ENCODE measurements at regions of chr14 and their contacts with region 1.

Region 1: DNA sequence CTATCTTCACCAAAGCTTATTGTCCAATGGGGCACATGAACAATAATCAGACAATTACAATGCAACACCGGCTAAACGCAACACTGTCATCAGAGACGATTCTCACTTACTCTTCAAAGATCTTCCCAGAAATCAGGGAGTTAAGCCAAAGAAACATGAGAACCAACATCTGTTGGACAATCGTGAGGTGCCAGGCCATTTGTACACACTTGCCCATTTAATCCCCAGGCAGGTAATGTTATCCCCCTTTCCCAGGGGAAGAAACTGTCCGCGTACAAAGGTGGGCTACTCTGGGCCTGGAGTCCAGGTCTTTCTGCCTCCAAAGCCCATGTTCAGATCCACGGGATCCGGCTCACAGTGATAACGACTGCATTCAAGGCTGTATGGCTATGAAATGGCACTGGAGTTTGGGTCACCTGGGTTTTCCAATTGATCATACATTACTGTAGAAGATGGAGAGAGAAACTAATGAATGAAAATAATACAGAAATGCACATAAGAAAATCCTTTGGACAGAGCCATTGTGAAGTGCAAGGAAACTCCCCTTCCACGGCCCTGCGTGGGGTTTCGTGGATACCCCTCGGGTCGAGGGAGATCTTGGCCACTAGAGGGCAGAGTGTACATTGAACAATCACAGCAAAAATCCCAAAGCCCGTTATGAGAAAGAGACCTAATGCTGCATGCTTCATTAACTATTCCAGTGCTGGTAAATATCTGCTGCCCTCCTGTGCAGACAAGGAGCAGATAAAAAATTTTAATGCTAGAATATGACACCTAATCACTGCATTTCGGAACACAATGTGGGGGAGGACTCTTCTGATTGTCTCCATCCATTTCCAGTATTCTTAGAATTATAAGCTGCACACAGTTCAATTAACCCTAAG is 111.4 kb downstream of the EGLN3 start:
- DNase-seq: peak in 1 of 2 donors; percentile 73
- ATAC-seq: peak in 2 of 3 donors; percentile 45 to 60
- H3K4me3 ChIP-seq: no peak overlapping the region
- H3K4me3 Mint-ChIP-seq: no peak overlapping the region
- H3K27ac ChIP-seq: no peak overlapping the region
- H3K27ac Mint-ChIP-seq: no peak overlapping the region
- H3K4me1 ChIP-seq: no peaks in the 10 kb centered on the region
- H3K4me1 Mint-ChIP-seq: no peaks in the 10 kb centered on the region
- H3K27me3 ChIP-seq: no peaks in the 10 kb centered on the region
- H3K27me3 Mint-ChIP-seq: no peaks in the 10 kb centered on the region
- CTCF ChIP-seq: peak; percentile 64

Region 2: GRCh38 chr14:33879684-33880286 is 40.4 kb after region 1 on chr14:
- intact Hi-C with region 1: no loop called
- DNase-seq: no peak
- ATAC-seq: no peak
- H3K4me3 ChIP-seq: no peak overlapping the region
- H3K4me3 Mint-ChIP-seq: no peak overlapping the region
- H3K27ac ChIP-seq: no peak overlapping the region
- H3K27ac Mint-ChIP-seq: no peak overlapping the region
- H3K4me1 ChIP-seq: no peaks in the 10 kb centered on the region
- H3K4me1 Mint-ChIP-seq: no peaks in the 10 kb centered on the region
- H3K27me3 ChIP-seq: no peaks in the 10 kb centered on the region
- H3K27me3 Mint-ChIP-seq: no peaks in the 10 kb centered on the region
- CTCF ChIP-seq: no peak

Region 3: DNA sequence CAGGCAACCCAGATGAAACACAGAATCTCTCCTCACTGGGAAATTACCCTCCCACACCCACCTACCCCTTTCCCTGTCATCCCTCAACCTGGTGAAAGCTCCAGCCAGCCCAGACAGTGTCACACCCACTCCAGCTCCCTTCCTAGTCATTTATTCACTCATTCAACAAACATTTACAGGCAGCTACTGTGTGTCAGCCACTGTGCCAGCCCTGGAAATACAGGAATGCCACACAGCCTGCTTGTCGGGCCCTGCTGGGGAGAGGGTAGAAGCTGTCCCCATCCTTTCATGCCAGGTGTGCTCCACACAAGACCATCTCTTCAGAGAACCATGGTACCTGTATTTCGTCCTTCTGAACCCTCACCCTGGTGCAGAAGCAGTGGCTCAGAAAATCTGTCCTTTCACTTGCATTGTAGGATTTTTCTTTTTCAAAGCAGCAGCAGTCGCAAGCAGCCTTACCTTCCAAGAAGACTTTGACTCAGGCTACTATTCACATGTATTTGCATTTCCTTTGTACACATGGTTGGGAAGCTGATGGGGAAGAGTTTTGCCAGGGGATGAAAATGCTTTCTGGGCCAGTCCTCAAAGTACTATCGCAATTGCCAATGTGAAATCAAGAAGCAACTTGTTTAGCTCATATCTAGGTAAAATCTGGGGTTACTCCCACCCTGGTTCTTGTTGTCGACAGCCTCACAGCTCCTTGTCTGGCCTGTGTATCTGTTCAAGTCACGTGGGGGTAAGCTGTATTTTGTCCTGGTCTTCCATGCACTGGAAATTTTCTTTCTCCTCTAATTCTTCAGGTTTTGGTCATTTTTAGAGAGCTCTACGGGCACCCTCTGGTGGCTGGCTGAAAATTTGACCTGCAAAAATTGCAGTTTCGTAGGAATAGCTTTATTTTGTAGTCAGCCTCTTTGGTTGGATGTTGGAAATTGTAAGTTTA is 258.9 kb after region 1 on chr14:
- intact Hi-C with region 1: loop called (anchors 1 kb)
- DNase-seq: peak in 1 of 2 donors; percentile 35
- ATAC-seq: no peak
- H3K4me3 ChIP-seq: no peak overlapping the region
- H3K4me3 Mint-ChIP-seq: no peak overlapping the region
- H3K27ac ChIP-seq: no peak overlapping the region
- H3K27ac Mint-ChIP-seq: no peak overlapping the region
- H3K4me1 ChIP-seq: no peaks in the 10 kb centered on the region
- H3K4me1 Mint-ChIP-seq: peaks cover 0 to 3% of the 10 kb centered on the region in 2 donors
- H3K27me3 ChIP-seq: no peaks in the 10 kb centered on the region
- H3K27me3 Mint-ChIP-seq: no peaks in the 10 kb centered on the region
- CTCF ChIP-seq: peak; percentile 10

Region 4: GRCh38 chr14:34120238-34120977 is 281.0 kb after region 1 on chr14:
- intact Hi-C with region 1: no loop called
- DNase-seq: no peak
- ATAC-seq: no peak
- H3K4me3 ChIP-seq: no peak overlapping the region
- H3K4me3 Mint-ChIP-seq: no peak overlapping the region
- H3K27ac ChIP-seq: no peak overlapping the region
- H3K27ac Mint-ChIP-seq: no peak overlapping the region
- H3K4me1 ChIP-seq: no peaks in the 10 kb centered on the region
- H3K4me1 Mint-ChIP-seq: no peaks in the 10 kb centered on the region
- H3K27me3 ChIP-seq: no peaks in the 10 kb centered on the region
- H3K27me3 Mint-ChIP-seq: peaks cover 1 to 12% of the 10 kb centered on the region in 2 donors
- CTCF ChIP-seq: no peak

Region 5: GRCh38 chr14:34227834-34228649 is 388.6 kb after region 1 on chr14:
- intact Hi-C with region 1: loop called (anchors 1 kb)
- DNase-seq: peak in 1 of 2 donors; percentile 67
- ATAC-seq: peak in 1 of 3 donors; percentile 69
- H3K4me3 ChIP-seq: no peak overlapping the region
- H3K4me3 Mint-ChIP-seq: no peak overlapping the region
- H3K27ac ChIP-seq: no peak overlapping the region
- H3K27ac Mint-ChIP-seq: no peak overlapping the region
- H3K4me1 ChIP-seq: no peaks in the 10 kb centered on the region
- H3K4me1 Mint-ChIP-seq: peaks cover 0 to 6% of the 10 kb centered on the region in 2 donors
- H3K27me3 ChIP-seq: peaks cover 2% of the 10 kb centered on the region
- H3K27me3 Mint-ChIP-seq: peaks cover 10 to 30% of the 10 kb centered on the region in 2 donors
- CTCF ChIP-seq: peak; percentile 26

Region 6: GRCh38 chr14:34300882-34301734 is 461.7 kb after region 1 on chr14:
- intact Hi-C with region 1: loop called (anchors 2 kb)
- DNase-seq: peak in 1 of 2 donors; percentile 52
- ATAC-seq: no peak
- H3K4me3 ChIP-seq: no peak overlapping the region
- H3K4me3 Mint-ChIP-seq: no peak overlapping the region
- H3K27ac ChIP-seq: no peak overlapping the region
- H3K27ac Mint-ChIP-seq: no peak overlapping the region
- H3K4me1 ChIP-seq: no peaks in the 10 kb centered on the region
- H3K4me1 Mint-ChIP-seq: no peaks in the 10 kb centered on the region
- H3K27me3 ChIP-seq: no peaks in the 10 kb centered on the region
- H3K27me3 Mint-ChIP-seq: peaks cover 7 to 10% of the 10 kb centered on the region in 2 donors
- CTCF ChIP-seq: peak; percentile 30

Region 7: GRCh38 chr14:34322940-34323418 is 483.5 kb after region 1 on chr14:
- intact Hi-C with region 1: loop called (anchors 5 kb)
- DNase-seq: peak; percentile 50 to 83
- ATAC-seq: peak; percentile 63 to 79 (median 79)
- H3K4me3 ChIP-seq: no peak overlapping the region
- H3K4me3 Mint-ChIP-seq: peak overlapping the region; percentile 19
- H3K27ac ChIP-seq: no peak overlapping the region
- H3K27ac Mint-ChIP-seq: no peak overlapping the region
- H3K4me1 ChIP-seq: no peaks in the 10 kb centered on the region
- H3K4me1 Mint-ChIP-seq: peaks cover 0 to 12% of the 10 kb centered on the region in 2 donors
- H3K27me3 ChIP-seq: no peaks in the 10 kb centered on the region
- H3K27me3 Mint-ChIP-seq: peaks cover 3 to 8% of the 10 kb centered on the region in 2 donors
- CTCF ChIP-seq: peak; percentile 80